ENCODE measurements at regions of chr1 and their contacts with region 1.

Region 1: GRCh38 chr1:246931549-246932365 is at the start of gene AHCTF1:
- DNase-seq: peak; percentile 89 to 98 (median 92)
- ATAC-seq: peak; percentile 90
- H3K4me3 ChIP-seq: peak within 1 kb of the TSS; percentile 94
- H3K4me3 Mint-ChIP-seq: peak within 1 kb of the TSS; percentile 99
- H3K27ac ChIP-seq: peak within 1 kb of the TSS; percentile 87 to 88
- H3K27ac Mint-ChIP-seq: peak within 1 kb of the TSS; percentile 96
- H3K4me1 ChIP-seq: peaks cover 20% of the 10 kb centered on the region
- H3K4me1 Mint-ChIP-seq: peaks cover 46% of the 10 kb centered on the region
- H3K27me3 ChIP-seq: no peaks in the 10 kb centered on the region
- H3K27me3 Mint-ChIP-seq: no peaks in the 10 kb centered on the region
- CTCF ChIP-seq: no peak
- total RNA-seq, gene AHCTF1: 65.6 to 68.8 TPM

Region 2: DNA sequence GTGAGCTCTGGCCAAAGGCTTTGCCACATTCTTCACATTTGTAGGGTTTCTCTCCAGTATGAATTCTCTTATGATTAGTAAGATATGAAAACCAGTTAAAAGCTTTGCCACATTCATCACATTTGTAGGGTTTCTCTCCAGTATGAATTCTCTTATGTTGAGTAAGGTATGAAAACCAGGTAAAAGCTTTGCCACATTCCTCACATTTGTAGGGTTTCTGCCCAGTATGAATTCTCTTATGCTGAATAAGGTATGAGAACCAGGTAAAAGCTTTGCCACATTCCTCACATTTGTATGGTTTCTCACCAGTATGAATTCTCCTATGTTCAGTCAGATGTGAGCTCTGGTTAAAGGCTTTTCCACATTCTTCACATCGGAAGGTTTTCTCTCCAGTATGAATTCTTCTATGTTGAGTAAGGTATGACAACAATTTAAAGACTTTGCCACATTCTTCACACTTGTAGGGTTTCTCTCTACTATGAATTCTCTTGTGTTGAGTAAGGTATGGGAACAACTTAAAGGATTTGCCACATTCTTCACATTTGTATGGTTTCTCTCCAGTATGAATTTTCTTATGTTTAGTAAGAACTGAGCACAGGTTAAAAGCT is 55.4 kb after region 1 on chr1:
- CTCF ChIA-PET with region 1: no interaction called
- POLR2A ChIA-PET with region 1: no interaction called
- intact Hi-C with region 1: no loop called
- DNase-seq: no peak
- ATAC-seq: no peak
- H3K4me3 ChIP-seq: no peak overlapping the region
- H3K4me3 Mint-ChIP-seq: no peak overlapping the region
- H3K27ac ChIP-seq: no peak overlapping the region
- H3K27ac Mint-ChIP-seq: no peak overlapping the region
- H3K4me1 ChIP-seq: no peaks in the 10 kb centered on the region
- H3K4me1 Mint-ChIP-seq: no peaks in the 10 kb centered on the region
- H3K27me3 ChIP-seq: no peaks in the 10 kb centered on the region
- H3K27me3 Mint-ChIP-seq: no peaks in the 10 kb centered on the region
- CTCF ChIP-seq: no peak

Region 3: DNA sequence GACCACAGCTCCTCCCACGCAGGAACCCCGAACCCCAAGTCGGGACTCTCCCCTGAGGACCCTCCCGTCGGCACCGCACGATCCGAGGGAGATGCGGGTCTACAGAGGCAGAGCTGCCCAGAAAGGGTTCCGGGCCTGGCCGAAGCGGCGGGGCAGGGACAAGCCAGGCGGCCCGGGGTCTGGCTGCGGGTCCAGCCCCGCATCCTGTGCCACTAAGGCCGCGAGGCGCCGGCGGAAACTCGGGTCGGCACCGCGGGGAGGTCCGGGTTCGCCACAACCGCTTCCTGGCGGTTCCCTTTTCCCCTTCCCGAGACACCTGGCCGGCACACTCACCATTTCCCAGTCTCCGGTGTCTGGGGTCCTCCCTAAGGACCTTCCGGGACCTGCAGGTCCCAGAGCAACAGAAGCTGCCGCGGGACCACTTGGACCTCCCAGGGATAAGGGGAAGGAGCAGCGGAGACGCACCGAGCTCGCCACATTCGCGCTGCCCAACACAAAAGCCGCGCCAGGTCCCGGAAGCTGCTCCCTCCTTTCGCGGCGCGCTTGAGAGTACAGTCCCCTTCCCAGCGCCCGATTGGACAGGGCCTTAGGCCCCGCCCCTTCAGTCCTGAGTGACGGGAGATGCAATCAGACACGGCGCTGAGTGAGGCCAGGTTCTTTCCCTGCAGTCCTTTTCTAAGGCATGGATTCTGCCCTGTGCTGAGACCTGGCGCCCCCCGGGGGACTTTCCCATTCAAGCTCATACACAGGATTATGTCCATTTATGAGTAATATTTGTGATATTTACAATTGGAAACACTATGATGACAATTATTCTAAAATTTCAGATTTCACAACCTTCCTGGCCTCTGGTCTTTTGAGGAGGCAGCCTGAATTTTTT is 146.7 kb after region 1 on chr1 and contains the start of gene ZNF670:
- CTCF ChIA-PET with region 1: no interaction called
- POLR2A ChIA-PET with region 1: interaction called, 8 read pairs
- intact Hi-C with region 1: loop called in 1 of 2 experiments (anchors 10 kb)
- DNase-seq: peak; percentile 51 to 92 (median 78)
- ATAC-seq: peak; percentile 99
- H3K4me3 ChIP-seq: peak within 1 kb of the TSS; percentile 84
- H3K4me3 Mint-ChIP-seq: peak within 1 kb of the TSS; percentile 93
- H3K27ac ChIP-seq: peak within 1 kb of the TSS in 1 of 2 donors; percentile 35
- H3K27ac Mint-ChIP-seq: peak within 1 kb of the TSS; percentile 71
- H3K4me1 ChIP-seq: peaks cover 16% of the 10 kb centered on the region
- H3K4me1 Mint-ChIP-seq: peaks cover 26% of the 10 kb centered on the region
- H3K27me3 ChIP-seq: no peaks in the 10 kb centered on the region
- H3K27me3 Mint-ChIP-seq: peaks cover 6% of the 10 kb centered on the region
- CTCF ChIP-seq: no peak
- total RNA-seq, gene ZNF670: 0.16 to 0.28 TPM

Region 4: GRCh38 chr1:247165674-247166073 is 233.9 kb after region 1 on chr1:
- CTCF ChIA-PET with region 1: no interaction called
- POLR2A ChIA-PET with region 1: no interaction called
- intact Hi-C with region 1: loop called in 1 of 2 experiments (anchors 5 kb)
- DNase-seq: no peak
- ATAC-seq: no peak
- H3K4me3 ChIP-seq: no peak overlapping the region
- H3K4me3 Mint-ChIP-seq: no peak overlapping the region
- H3K27ac ChIP-seq: no peak overlapping the region
- H3K27ac Mint-ChIP-seq: no peak overlapping the region
- H3K4me1 ChIP-seq: peaks cover 2% of the 10 kb centered on the region
- H3K4me1 Mint-ChIP-seq: peaks cover 47% of the 10 kb centered on the region
- H3K27me3 ChIP-seq: no peaks in the 10 kb centered on the region
- H3K27me3 Mint-ChIP-seq: no peaks in the 10 kb centered on the region
- CTCF ChIP-seq: no peak

Region 5: GRCh38 chr1:247331172-247331991 is 399.6 kb after region 1 on chr1 and contains the start of gene ZNF496:
- CTCF ChIA-PET with region 1: no interaction called
- POLR2A ChIA-PET with region 1: interaction called, 4 read pairs
- intact Hi-C with region 1: loop called in 1 of 2 experiments (anchors 5 kb)
- DNase-seq: peak; percentile 35 to 80 (median 60)
- ATAC-seq: peak; percentile 75
- H3K4me3 ChIP-seq: peak within 1 kb of the TSS; percentile 85
- H3K4me3 Mint-ChIP-seq: peak within 1 kb of the TSS; percentile 97
- H3K27ac ChIP-seq: peak within 1 kb of the TSS in 1 of 2 donors; percentile 9
- H3K27ac Mint-ChIP-seq: peak within 1 kb of the TSS; percentile 61
- H3K4me1 ChIP-seq: peaks cover 21% of the 10 kb centered on the region
- H3K4me1 Mint-ChIP-seq: peaks cover 50% of the 10 kb centered on the region
- H3K27me3 ChIP-seq: no peaks in the 10 kb centered on the region
- H3K27me3 Mint-ChIP-seq: no peaks in the 10 kb centered on the region
- CTCF ChIP-seq: no peak
- total RNA-seq, gene ZNF496: 15.8 to 19.9 TPM